Activated CD4-positive, alpha-beta T cell treated with anti-CD3 and anti-CD28 coated beads for 36 hours (primary cell): ENCODE measurements at regions of chr9 and their contacts with region 1.

Region 1: GRCh38 chr9:131668439-131669268 is 71.2 kb downstream of the RAPGEF1 start:
- DNase-seq: peak; percentile 83
- ATAC-seq: peak; percentile 68
- H3K4me3 Mint-ChIP-seq: peak overlapping the region; percentile 54
- H3K27ac Mint-ChIP-seq: peak overlapping the region; percentile 96
- H3K4me1 Mint-ChIP-seq: peaks cover 93% of the 10 kb centered on the region
- H3K27me3 Mint-ChIP-seq: no peaks in the 10 kb centered on the region

Region 2: GRCh38 chr9:131068076-131068816 is 600.4 kb before region 1 on chr9:
- CTCF ChIA-PET with region 1: no interaction called
- POLR2A ChIA-PET with region 1: no interaction called
- intact Hi-C with region 1: no loop called
- DNase-seq: no peak
- ATAC-seq: no peak
- H3K4me3 Mint-ChIP-seq: no peak overlapping the region
- H3K27ac Mint-ChIP-seq: no peak overlapping the region
- H3K4me1 Mint-ChIP-seq: no peaks in the 10 kb centered on the region
- H3K27me3 Mint-ChIP-seq: peaks cover 4% of the 10 kb centered on the region

Region 3: DNA sequence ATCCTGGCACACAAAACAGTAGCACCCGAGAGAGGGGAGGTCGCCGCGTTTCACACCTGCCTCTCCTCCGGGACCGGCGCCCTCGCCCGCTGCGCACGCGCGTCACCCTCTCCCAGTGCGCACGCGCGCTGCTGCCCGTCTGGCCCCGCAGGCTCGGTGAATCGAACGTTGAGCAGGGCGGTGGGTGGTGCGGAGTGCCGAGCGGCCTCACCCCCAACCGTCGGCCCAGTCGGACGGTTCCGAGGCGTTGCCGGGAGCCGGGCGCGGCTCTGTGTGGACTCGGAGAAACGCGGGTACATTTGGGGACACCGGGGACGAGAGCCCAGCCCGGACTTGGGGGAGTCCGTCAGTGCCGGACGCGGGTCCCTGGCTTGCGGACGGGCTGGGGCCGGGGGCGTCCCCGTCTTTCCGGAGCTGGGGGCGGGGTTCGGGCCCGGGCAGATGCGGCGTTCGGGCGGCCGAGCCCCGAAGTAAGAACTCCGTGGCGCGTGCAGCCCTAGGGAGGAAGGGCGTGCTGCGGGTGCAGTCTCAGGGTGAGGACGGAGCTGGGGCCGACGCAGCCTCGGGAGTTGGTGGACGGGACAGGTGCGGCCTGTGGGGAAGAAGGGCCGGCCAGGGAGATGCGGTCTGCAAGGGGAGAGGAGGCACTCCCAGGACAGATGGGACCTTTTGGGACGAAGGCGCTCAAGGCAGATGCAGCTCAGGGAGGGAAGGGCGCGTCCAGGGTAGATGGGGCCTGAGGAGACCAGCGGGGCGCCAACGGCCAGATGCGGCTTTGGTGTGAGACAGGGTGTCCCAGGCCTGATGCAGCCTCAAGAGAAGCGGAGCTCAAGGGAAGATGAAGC is 165.7 kb before region 1 on chr9 and contains the start of gene POMT1:
- CTCF ChIA-PET with region 1: interaction called, 3 read pairs
- POLR2A ChIA-PET with region 1: no interaction called
- intact Hi-C with region 1: loop called (anchors 5 kb)
- DNase-seq: peak; percentile 94
- ATAC-seq: peak; percentile 42
- H3K4me3 Mint-ChIP-seq: peak within 1 kb of the TSS; percentile 83
- H3K27ac Mint-ChIP-seq: peak within 1 kb of the TSS; percentile 84
- H3K4me1 Mint-ChIP-seq: peaks cover 53% of the 10 kb centered on the region
- H3K27me3 Mint-ChIP-seq: no peaks in the 10 kb centered on the region
- total RNA-seq, gene POMT1: 28.2 to 30.7 TPM

Region 4: DNA sequence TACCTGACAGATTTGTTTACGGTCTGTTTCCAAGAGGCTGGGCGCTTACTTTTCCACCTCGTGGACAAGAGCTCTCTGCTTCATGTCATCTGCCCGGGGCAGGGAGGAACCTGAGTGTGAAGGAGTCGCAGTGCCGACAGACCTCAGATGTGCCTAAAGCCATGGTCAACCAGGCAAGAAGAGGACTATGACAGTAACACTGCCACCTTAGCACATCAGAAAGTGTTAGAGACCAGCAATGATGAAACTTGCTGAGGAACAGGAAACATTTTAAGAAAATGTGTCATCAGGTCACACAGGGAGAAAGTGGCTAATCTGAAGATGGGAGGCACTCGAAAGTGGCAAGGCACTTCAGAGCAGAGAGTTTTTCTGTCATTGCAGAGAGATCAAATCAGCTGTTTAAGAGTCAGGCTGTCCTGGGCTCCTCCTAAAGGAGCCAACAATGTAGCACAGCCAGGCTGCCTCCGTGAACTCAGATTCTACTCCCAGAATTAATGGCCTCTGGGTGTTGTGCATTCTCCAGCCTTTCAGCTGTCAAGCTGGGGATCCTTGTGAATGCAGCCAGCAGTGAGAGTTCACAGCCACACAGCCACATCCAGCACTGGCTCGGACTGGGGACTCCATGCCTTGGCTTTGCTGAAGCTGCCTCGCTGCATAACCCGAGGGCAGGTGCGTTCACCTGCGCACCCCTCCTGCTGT is 23.4 kb before region 1 on chr9:
- CTCF ChIA-PET with region 1: interaction called, 9 read pairs
- POLR2A ChIA-PET with region 1: interaction called, 14 read pairs
- intact Hi-C with region 1: loop called (anchors 1 to 2 kb)
- DNase-seq: peak; percentile 54
- ATAC-seq: peak; percentile 65
- H3K4me3 Mint-ChIP-seq: no peak overlapping the region
- H3K27ac Mint-ChIP-seq: peak overlapping the region; percentile 89
- H3K4me1 Mint-ChIP-seq: peaks cover 63% of the 10 kb centered on the region
- H3K27me3 Mint-ChIP-seq: no peaks in the 10 kb centered on the region

Region 5: GRCh38 chr9:131656356-131657036 is 12.2 kb before region 1 on chr9:
- CTCF ChIA-PET with region 1: interaction called, 8 read pairs
- POLR2A ChIA-PET with region 1: interaction called, 5 read pairs
- intact Hi-C with region 1: loop called (anchors 1 kb)
- DNase-seq: peak; percentile 81
- ATAC-seq: peak; percentile 68
- H3K4me3 Mint-ChIP-seq: peak overlapping the region; percentile 39
- H3K27ac Mint-ChIP-seq: peak overlapping the region; percentile 87
- H3K4me1 Mint-ChIP-seq: peaks cover 83% of the 10 kb centered on the region
- H3K27me3 Mint-ChIP-seq: no peaks in the 10 kb centered on the region